Activated naive CD4-positive, alpha-beta T cell treated with anti-CD3 and anti-CD28 coated beads, Interleukin-2, amount 10 ng/mL, durations not matched to agents 7 days and 5 days (primary cell): ENCODE measurements at regions of chr1 and their contacts with region 1.

Region 1: DNA sequence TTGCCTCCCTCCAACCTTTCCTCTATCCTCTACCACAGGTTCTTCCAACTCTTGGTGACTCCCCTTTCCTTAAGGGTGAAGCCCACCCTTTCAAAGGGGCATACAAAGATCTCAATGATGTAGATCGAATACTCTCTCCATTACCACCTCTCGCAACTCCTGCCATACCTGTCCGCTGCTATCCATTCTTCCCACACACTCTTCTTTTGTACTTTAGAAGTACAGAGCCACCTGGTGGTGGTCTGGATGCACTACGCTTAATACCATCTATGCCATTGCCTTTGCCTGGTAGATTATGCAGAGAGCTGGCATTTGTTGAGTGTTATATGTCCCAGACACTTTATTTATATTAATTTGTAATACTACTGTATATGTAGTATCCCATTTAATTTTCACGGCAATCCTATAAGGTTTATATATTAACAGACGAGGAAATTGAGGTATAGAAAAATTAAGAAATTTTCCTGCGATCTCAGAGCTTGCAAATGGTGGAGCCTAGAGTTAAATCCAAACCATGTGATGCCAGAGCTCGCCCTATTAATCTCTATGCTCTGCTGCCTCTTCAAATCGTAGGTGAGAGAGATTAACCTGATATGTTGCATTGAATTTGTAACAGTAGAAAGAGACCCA is 22.9 kb downstream of the TSHB start:
- DNase-seq: peak; percentile 65
- H3K4me3 Mint-ChIP-seq: no peak overlapping the region
- H3K27ac Mint-ChIP-seq: no peak overlapping the region
- H3K4me1 Mint-ChIP-seq: peaks cover 5% of the 10 kb centered on the region
- H3K27me3 Mint-ChIP-seq: peaks cover 4% of the 10 kb centered on the region

Region 2: DNA sequence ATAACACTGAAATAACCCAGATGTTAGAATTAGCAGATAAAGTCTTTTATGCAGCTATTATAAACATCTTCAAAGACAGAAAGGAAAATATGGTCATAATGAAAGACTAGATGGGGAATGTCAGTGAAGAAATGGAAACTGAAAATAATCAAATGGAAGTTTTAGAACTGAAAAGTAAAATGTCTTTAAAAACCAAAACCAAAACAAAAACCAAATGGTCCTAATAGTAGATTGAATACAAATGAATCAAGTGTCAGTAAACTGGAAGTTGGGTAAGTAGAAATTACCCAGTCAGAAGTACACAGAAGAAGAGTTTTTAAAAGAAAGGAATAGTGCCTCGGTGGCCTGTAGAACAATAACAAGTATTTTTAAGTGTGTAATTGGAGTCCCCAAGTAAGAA is 125.2 kb before region 1 on chr1:
- CTCF ChIA-PET with region 1: no interaction called
- DNase-seq: no peak
- H3K4me3 Mint-ChIP-seq: no peak overlapping the region
- H3K27ac Mint-ChIP-seq: no peak overlapping the region
- H3K4me1 Mint-ChIP-seq: no peaks in the 10 kb centered on the region
- H3K27me3 Mint-ChIP-seq: peaks cover 9% of the 10 kb centered on the region

Region 3: GRCh38 chr1:115041654-115042053 is 10.9 kb before region 1 on chr1:
- CTCF ChIA-PET with region 1: interaction called, 10 read pairs
- DNase-seq: no peak
- H3K4me3 Mint-ChIP-seq: no peak overlapping the region
- H3K27ac Mint-ChIP-seq: no peak overlapping the region
- H3K4me1 Mint-ChIP-seq: no peaks in the 10 kb centered on the region
- H3K27me3 Mint-ChIP-seq: no peaks in the 10 kb centered on the region

Region 4: GRCh38 chr1:115098979-115099692 is 46.6 kb after region 1 on chr1:
- CTCF ChIA-PET with region 1: interaction called, 10 read pairs
- DNase-seq: peak; percentile 84
- H3K4me3 Mint-ChIP-seq: peak overlapping the region; percentile 72
- H3K27ac Mint-ChIP-seq: peak overlapping the region; percentile 94
- H3K4me1 Mint-ChIP-seq: peaks cover 35% of the 10 kb centered on the region
- H3K27me3 Mint-ChIP-seq: peaks cover 24% of the 10 kb centered on the region

Region 5: GRCh38 chr1:115112496-115113375 is 60.2 kb after region 1 on chr1:
- CTCF ChIA-PET with region 1: interaction called, 21 read pairs
- DNase-seq: peak; percentile 56
- H3K4me3 Mint-ChIP-seq: no peak overlapping the region
- H3K27ac Mint-ChIP-seq: no peak overlapping the region
- H3K4me1 Mint-ChIP-seq: no peaks in the 10 kb centered on the region
- H3K27me3 Mint-ChIP-seq: no peaks in the 10 kb centered on the region

Region 6: GRCh38 chr1:115145226-115145625 is 92.7 kb after region 1 on chr1:
- CTCF ChIA-PET with region 1: no interaction called
- DNase-seq: no peak
- H3K4me3 Mint-ChIP-seq: no peak overlapping the region
- H3K27ac Mint-ChIP-seq: no peak overlapping the region
- H3K4me1 Mint-ChIP-seq: peaks cover 4% of the 10 kb centered on the region
- H3K27me3 Mint-ChIP-seq: peaks cover 31% of the 10 kb centered on the region